ENCODE measurements at regions of chr14 and their contacts with region 1.

Region 1: GRCh38 chr14:102509744-102510615 is at the start of gene ANKRD9:
- DNase-seq: peak; percentile 97 to 99
- ATAC-seq: peak; percentile 95
- H3K4me3 ChIP-seq: peak within 1 kb of the TSS; percentile 56 to 58
- H3K27ac ChIP-seq: peak within 1 kb of the TSS in 1 of 2 donors; percentile 7
- H3K4me1 ChIP-seq: no peaks in the 10 kb centered on the region
- H3K27me3 ChIP-seq: no peaks in the 10 kb centered on the region
- total RNA-seq, gene ANKRD9: 13.7 to 15.0 TPM

Region 2: DNA sequence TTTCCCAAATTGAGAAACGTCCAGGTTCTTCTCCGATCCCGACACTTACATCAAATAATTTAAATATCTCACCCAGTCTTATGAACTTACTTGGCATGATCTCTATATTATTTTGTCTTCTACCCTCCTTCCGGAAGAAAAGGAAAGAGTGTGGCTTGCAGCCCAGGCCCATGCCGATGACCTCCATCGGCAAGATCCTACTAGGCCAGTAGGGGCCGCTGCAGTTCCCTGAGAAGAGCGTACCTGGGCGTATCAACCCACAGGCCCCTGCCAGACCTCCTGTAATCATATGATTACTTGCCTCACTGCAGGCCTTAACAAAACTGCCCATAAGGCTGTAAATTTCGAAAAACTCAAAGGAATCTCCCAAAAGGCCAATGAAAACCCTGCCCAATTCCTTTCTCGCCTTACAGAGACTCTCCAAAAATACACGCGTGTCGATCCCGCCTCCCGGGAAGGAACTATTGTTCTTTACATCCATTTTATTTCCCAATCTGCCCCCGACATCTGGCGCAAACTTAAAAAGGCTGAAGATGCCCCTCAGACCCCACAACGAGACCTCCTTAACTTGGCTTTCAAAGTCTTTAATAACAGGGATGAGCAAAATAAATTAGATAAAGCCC is 274.6 kb before region 1 on chr14:
- intact Hi-C with region 1: loop called in 1 of 2 experiments (anchors 10 kb)
- DNase-seq: peak; percentile 88 to 94
- ATAC-seq: peak; percentile 91
- H3K4me3 ChIP-seq: no peak overlapping the region
- H3K27ac ChIP-seq: no peak overlapping the region
- H3K4me1 ChIP-seq: no peaks in the 10 kb centered on the region
- H3K27me3 ChIP-seq: no peaks in the 10 kb centered on the region

Region 3: GRCh38 chr14:102430212-102430908 is 79.6 kb before region 1 on chr14:
- intact Hi-C with region 1: no loop called
- DNase-seq: peak in 1 of 2 donors; percentile 49
- ATAC-seq: no peak
- H3K4me3 ChIP-seq: no peak overlapping the region
- H3K27ac ChIP-seq: no peak overlapping the region
- H3K4me1 ChIP-seq: no peaks in the 10 kb centered on the region
- H3K27me3 ChIP-seq: no peaks in the 10 kb centered on the region

Measured in aorta (tissue), 5 donors.